ENCODE measurements at regions of chr6 and their contacts with region 1.

Region 1: DNA sequence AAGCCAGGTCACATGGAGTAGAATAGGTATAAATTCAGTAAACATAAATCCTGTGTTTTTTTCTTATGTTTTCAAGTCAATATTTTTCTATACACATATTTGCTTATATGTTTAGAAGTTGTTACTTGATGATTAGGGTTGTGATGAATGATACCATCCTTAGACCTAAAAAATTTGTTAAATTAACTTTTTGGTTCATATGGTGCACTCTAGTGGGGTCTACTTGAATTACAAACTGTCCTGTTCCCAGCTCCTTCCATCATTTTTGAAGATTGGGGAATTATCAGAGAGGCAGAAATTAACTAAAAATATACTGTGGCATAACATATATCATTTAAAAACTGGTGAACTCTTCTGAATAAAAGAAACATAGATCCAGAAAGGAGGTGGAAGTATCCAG is 48.3 kb upstream of the RIPPLY2 start:
- DNase-seq: no peak
- H3K4me3 ChIP-seq: no peak overlapping the region
- H3K27ac ChIP-seq: no peak overlapping the region
- H3K4me1 ChIP-seq: no peaks in the 10 kb centered on the region
- H3K27me3 ChIP-seq: no peaks in the 10 kb centered on the region
- CTCF ChIP-seq: no peak
- EP300 ChIP-seq: no peak
- POLR2A ChIP-seq: no peak

Region 2: GRCh38 chr6:81939774-81940165 is 1865.1 kb before region 1 on chr6:
- in situ Hi-C with region 1: no loop called
- intact Hi-C with region 1: loop called (anchors 10 kb)
- DNase-seq: no peak
- H3K4me3 ChIP-seq: no peak overlapping the region
- H3K27ac ChIP-seq: no peak overlapping the region
- H3K4me1 ChIP-seq: peaks cover 0 to 20% (median 8%) of the 10 kb centered on the region in 4 donors
- H3K27me3 ChIP-seq: no peaks in the 10 kb centered on the region
- CTCF ChIP-seq: no peak
- EP300 ChIP-seq: no peak
- POLR2A ChIP-seq: no peak

Measured in transverse colon (tissue), 4 donors.